ENCODE measurements at regions of chr6 and their contacts with region 1.

Region 1: DNA sequence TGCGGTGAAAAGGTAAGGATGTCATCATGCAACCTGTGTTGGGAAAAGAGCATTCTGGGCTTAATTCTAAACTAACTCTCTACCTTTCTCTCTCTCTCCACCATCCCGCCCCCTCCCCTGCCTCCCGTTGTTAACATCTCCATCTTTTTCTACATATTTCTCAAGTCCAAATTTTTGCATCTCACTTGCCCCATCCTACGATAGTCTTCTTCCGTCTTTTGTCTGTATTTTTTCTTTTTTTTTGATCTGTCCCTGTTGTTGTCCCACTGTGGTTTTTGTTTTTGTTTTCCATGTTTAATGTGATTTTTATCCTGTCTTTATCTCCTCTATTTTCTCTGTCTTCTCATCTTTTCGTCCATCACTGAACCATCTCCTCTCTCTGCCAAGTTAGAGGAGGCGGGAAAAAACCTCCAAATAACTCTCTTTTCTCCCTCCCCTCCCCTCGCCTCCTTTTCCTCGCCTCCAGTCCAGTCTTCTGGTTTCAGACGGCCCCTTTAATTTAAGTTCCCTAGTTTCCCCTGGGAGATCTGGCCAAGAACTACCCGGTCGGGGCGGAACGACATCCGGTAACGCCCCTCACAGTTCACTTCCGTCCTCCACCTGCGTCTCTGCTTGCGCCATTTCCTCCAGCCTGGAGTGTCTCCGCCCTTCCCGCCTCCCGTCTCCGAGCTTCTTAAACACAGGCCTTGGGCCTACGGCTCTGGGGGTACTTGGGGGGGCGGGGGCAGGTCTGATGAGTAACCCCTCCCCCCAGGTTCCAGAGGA is at the start of gene NFKBIL1:
- DNase-seq: peak; percentile 89
- CTCF ChIP-seq: no peak

Region 2: GRCh38 chr6:31345026-31345730 is 202.0 kb before region 1 on chr6:
- CTCF ChIA-PET with region 1: no interaction called
- POLR2A ChIA-PET with region 1: no interaction called
- DNase-seq: no peak
- CTCF ChIP-seq: no peak

Region 3: DNA sequence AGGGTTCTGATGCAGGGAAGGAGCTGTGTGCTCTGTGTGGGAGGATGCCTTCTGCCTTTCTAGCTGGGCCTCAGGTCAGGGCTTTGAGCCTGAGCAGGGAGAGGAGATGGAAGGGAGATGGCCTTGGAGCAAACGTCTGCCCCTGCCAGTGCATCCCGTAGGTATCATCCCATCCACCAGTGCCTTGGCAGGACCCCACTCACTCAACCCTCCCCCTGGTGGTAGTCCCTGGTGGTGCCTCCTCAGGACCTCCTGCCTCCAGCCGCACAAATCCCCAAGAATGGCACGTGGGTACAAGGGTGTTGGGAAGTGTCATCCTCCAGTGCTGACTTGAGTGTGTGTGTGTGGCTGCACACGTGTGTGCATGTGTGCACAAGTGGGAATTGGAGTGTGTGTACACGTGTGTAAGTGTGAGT is 72.3 kb before region 1 on chr6:
- CTCF ChIA-PET with region 1: no interaction called
- POLR2A ChIA-PET with region 1: no interaction called
- DNase-seq: no peak
- CTCF ChIP-seq: no peak

Region 4: GRCh38 chr6:31493875-31494694 is 53.1 kb before region 1 on chr6:
- CTCF ChIA-PET with region 1: interaction called, 14 read pairs
- POLR2A ChIA-PET with region 1: interaction called, 6 read pairs
- DNase-seq: peak; percentile 64
- CTCF ChIP-seq: peak; percentile 92

Region 5: DNA sequence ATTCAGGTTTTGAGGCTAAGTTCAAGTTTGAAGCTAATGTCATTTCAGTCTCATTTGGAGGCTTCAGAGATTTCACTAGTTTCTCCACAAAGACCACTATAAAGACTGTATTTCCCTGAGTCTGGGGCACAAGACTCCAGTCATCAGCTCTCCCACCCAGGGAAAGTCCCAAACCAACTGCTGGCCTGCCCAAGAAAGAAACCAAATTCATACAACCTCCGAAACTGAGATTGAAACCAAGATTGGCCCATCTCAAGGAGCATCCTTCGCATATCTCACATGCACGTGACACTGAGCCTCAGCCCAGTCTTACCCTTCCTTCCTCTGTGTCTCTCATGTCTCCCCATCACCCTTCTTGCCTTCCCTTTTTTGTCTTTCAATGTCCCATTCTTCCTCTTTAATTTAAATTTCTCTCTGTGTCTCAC is 21.4 kb after region 1 on chr6:
- CTCF ChIA-PET with region 1: interaction called, 2,725 read pairs
- POLR2A ChIA-PET with region 1: no interaction called
- DNase-seq: peak; percentile 74
- CTCF ChIP-seq: no peak

Region 6: GRCh38 chr6:31615748-31616147 is 68.6 kb after region 1 on chr6:
- CTCF ChIA-PET with region 1: interaction called, 2,725 read pairs
- POLR2A ChIA-PET with region 1: no interaction called
- DNase-seq: no peak
- CTCF ChIP-seq: no peak

Region 7: GRCh38 chr6:31660381-31661261 is 113.5 kb after region 1 on chr6 and contains the start of gene C6orf47:
- CTCF ChIA-PET with region 1: interaction called, 12 read pairs
- POLR2A ChIA-PET with region 1: no interaction called
- DNase-seq: peak; percentile 86
- CTCF ChIP-seq: no peak